ENCODE measurements at regions of chr7 and their contacts with region 1.

Region 1: GRCh38 chr7:86212976-86213375 is 430.7 kb upstream of the GRM3 start:
- DNase-seq: no peak
- H3K4me3 ChIP-seq: no peak overlapping the region
- H3K27ac ChIP-seq: no peak overlapping the region
- H3K4me1 ChIP-seq: peaks cover 23% of the 10 kb centered on the region
- CTCF ChIP-seq: no peak

Region 2: GRCh38 chr7:85796956-85797355 is 416.0 kb before region 1 on chr7:
- CTCF ChIA-PET with region 1: no interaction called
- POLR2A ChIA-PET with region 1: no interaction called
- intact Hi-C with region 1: no loop called
- DNase-seq: no peak
- H3K4me3 ChIP-seq: no peak overlapping the region
- H3K27ac ChIP-seq: no peak overlapping the region
- H3K4me1 ChIP-seq: no peaks in the 10 kb centered on the region
- CTCF ChIP-seq: no peak

Region 3: GRCh38 chr7:86226191-86226590 is 13.2 kb after region 1 on chr7:
- CTCF ChIA-PET with region 1: no interaction called
- POLR2A ChIA-PET with region 1: interaction called, 14 read pairs
- intact Hi-C with region 1: no loop called
- DNase-seq: no peak
- H3K4me3 ChIP-seq: no peak overlapping the region
- H3K27ac ChIP-seq: no peak overlapping the region
- H3K4me1 ChIP-seq: no peaks in the 10 kb centered on the region
- CTCF ChIP-seq: no peak

Region 4: DNA sequence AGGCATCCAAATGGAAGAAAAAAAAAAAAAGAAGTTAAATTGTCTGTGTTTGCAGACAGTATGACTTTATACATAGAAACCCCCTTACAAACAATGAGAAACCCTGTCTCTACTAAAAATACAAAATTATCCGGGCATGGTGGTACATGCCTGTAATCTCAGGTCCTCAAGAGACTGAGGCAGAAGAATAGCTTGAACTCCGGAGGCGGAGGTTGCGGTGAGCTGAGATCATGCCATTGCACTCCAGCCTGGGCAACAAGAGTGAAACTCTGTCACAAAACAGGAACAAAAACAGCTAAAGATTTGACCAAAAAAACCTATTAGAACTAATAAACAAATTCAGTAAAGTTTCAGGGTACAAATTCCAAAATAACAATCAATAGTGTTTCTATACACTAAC is 44.9 kb after region 1 on chr7:
- CTCF ChIA-PET with region 1: no interaction called
- POLR2A ChIA-PET with region 1: no interaction called
- intact Hi-C with region 1: no loop called
- DNase-seq: no peak
- H3K4me3 ChIP-seq: no peak overlapping the region
- H3K27ac ChIP-seq: no peak overlapping the region
- H3K4me1 ChIP-seq: no peaks in the 10 kb centered on the region
- CTCF ChIP-seq: no peak

Region 5: DNA sequence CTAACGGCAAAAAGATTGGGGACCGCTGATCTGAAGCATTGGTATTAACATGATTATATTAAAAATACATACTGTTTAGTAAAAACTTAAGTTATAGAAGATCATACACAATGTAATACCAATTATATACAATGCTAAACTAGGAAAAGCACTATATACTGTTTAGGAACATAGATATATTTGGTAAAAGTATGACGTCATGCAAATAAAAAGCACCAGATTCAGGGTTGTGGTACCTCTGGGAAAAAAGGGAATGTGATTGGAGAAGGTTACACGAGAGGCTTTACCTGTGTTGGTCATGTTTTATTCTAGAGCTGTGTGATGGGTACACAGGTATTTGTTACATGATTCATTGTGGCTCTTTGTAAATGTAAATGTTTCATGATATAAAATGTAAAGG is 193.8 kb after region 1 on chr7:
- CTCF ChIA-PET with region 1: no interaction called
- POLR2A ChIA-PET with region 1: no interaction called
- intact Hi-C with region 1: no loop called
- DNase-seq: no peak
- H3K4me3 ChIP-seq: no peak overlapping the region
- H3K27ac ChIP-seq: no peak overlapping the region
- H3K4me1 ChIP-seq: no peaks in the 10 kb centered on the region
- CTCF ChIP-seq: no peak